ENCODE measurements at regions of chr6 and their contacts with region 1.

Region 1: DNA sequence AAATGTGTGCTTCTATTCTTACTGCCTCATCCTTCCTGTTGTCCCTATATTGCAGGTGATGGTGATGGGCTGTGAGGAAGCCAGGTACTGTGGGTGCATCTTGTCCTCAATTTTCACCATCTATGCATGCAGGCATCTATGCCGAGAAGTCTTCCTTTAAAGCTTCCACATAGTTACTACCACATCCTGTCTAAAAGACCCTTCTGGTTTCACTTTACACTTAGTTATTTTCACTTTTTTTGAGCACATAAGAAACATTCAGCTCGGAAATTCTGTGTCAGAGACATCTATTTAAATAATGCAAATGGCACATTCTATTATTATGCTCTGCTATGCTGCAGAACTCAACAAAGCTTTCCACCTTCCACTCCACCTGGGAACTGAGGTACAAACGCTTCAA is 28.2 kb upstream of the FABP7 start:
- DNase-seq: no peak
- H3K4me3 ChIP-seq: no peak overlapping the region
- H3K27ac ChIP-seq: no peak overlapping the region
- H3K4me1 ChIP-seq: no peaks in the 10 kb centered on the region
- H3K27me3 ChIP-seq: no peaks in the 10 kb centered on the region
- CTCF ChIP-seq: no peak
- POLR2A ChIP-seq: no peak

Region 2: GRCh38 chr6:122049341-122049740 is 702.0 kb before region 1 on chr6:
- intact Hi-C with region 1: no loop called
- DNase-seq: peak in 5 of 7 donors; percentile 21 to 29 (median 23)
- H3K4me3 ChIP-seq: peak overlapping the region in 2 of 4 donors; percentile 30 to 42
- H3K27ac ChIP-seq: no peak overlapping the region
- H3K4me1 ChIP-seq: no peaks in the 10 kb centered on the region
- H3K27me3 ChIP-seq: no peaks in the 10 kb centered on the region
- CTCF ChIP-seq: no peak
- POLR2A ChIP-seq: no peak

Region 3: DNA sequence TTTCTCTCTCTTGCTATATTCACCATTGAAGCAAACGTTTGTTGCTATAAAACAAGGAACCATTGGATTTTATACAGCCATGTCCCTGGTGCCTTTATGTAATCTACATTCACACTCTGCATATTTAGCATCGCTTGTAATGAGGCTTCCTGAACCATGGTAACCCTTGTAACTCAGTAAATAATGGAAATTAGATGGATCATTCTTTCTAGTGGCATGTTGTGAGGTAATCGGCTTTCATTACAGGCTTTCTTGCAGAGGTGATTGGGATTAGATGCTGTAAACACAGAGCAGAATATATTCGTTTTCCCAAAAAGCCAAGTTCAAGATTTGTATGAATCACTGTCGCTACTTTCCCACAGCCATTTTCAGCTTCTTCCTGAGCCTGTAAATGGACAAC is 73.8 kb after region 1 on chr6:
- intact Hi-C with region 1: loop called in 1 of 2 experiments (anchors 5 kb)
- DNase-seq: no peak
- H3K4me3 ChIP-seq: no peak overlapping the region
- H3K27ac ChIP-seq: no peak overlapping the region
- H3K4me1 ChIP-seq: no peaks in the 10 kb centered on the region
- H3K27me3 ChIP-seq: no peaks in the 10 kb centered on the region
- CTCF ChIP-seq: no peak
- POLR2A ChIP-seq: no peak

Region 4: GRCh38 chr6:122839477-122839876 is 88.2 kb after region 1 on chr6:
- intact Hi-C with region 1: loop called in 1 of 2 experiments (anchors 5 kb)
- DNase-seq: peak; percentile 44 to 83 (median 68)
- H3K4me3 ChIP-seq: no peak overlapping the region
- H3K27ac ChIP-seq: no peak overlapping the region
- H3K4me1 ChIP-seq: no peaks in the 10 kb centered on the region
- H3K27me3 ChIP-seq: no peaks in the 10 kb centered on the region
- CTCF ChIP-seq: peak; percentile 63 to 84 (median 68)
- POLR2A ChIP-seq: no peak

Region 5: DNA sequence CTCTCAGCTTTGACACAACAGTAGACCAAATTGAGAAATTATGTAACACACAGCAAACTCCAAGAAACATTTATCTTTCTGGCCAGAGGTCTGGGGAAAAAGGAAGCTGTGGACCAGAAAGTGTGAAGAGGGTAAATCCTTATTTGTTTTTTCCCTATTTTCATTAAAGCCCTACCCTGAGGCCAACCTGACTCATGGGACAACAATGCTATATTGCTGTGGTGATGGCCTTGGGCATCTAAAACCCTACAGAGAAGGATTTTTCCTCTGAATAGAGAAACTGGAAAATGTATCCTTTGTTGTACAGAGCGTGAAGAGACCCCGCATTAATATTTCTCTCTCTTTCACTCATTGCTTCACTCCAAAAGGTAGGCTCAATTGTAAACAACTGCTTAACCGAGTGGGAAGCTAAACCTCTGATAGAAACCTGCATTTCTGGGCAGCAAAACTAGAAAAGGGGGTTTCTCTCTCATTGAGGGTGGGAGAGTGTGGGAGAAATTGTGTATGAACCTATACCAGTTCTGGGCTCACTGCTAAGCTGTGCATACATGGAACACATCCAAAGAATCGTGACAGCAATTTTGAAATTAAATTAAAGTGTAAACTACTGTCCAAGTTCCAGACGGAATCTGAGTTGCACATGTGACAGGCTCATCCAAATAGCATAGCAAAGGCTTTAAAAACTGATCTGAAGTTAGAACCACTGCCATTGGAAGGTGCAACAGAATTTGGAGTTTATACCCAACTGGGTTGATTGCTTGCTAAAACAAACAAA is 420.2 kb after region 1 on chr6:
- intact Hi-C with region 1: no loop called
- DNase-seq: peak in 1 of 7 donors; percentile 4
- H3K4me3 ChIP-seq: no peak overlapping the region
- H3K27ac ChIP-seq: no peak overlapping the region
- H3K4me1 ChIP-seq: no peaks in the 10 kb centered on the region
- H3K27me3 ChIP-seq: no peaks in the 10 kb centered on the region
- CTCF ChIP-seq: no peak
- POLR2A ChIP-seq: no peak

Measured in adrenal gland (tissue), 19 donors.